ENCODE measurements at regions of chr20 and their contacts with region 1.

Region 1: GRCh38 chr20:25390538-25391528 is at the start of gene ABHD12:
- DNase-seq: peak; percentile 91 to 99 (median 97)

Region 2: DNA sequence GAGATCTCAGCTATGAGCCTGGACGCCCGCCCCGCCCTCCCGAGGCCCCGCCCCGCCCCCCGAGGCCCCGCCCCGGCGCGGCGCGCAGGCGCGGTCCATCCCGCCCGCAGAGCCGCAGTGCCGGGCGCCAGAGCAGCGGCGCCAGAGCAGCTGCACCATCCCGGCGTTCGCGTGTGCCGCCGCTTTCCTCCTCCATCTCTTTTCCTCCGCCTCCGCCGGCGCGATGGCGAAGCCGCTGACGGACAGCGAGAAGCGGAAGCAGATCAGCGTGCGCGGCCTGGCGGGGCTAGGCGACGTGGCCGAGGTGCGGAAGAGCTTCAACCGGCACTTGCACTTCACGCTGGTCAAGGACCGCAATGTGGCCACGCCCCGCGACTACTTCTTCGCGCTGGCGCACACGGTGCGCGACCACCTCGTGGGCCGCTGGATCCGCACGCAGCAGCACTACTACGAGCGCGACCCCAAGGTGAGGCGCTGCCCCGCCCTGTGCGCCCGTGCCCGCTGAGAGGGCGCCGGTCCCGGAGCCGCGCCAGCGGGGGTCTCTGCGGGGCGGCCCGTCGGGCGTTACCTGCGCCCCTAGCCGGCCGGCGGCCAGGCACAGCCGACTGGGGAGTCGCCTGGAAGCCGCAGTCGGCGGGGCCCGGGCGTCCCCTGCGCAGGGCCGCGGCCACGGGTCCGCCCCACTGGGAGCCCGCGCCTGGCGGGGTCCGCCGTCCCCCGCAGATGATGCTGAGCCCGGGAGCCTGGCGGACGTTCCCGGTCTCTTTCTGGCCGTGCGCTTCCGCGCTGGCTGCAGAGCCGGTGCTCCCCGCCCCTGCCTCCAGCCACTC is 142.7 kb before region 1 on chr20 and contains the start of gene PYGB:
- intact Hi-C with region 1: loop called (anchors 5 kb)
- DNase-seq: peak; percentile 34 to 90 (median 82)

Region 3: DNA sequence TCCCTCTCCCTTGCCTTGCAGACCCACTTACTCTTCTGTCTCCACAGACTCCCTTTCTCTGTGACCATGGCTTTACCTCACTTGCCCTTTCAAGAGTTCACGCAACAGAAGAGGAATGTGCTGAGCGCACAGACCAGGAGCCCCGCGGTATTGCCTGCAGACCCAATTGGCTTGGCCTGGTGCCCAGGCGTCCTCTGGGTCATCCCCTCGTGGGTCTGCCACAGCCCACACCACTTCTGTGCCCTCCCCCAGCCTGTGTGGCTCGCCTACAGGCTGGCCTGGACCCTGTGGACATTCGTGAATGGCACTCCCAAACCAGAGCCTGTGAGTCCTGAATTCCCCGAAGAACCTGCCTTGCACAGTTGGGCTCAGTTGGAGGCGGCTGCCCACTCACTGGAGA is 209.8 kb after region 1 on chr20:
- intact Hi-C with region 1: no loop called
- DNase-seq: no peak

Region 4: GRCh38 chr20:25669826-25670422 is 279.1 kb after region 1 on chr20:
- intact Hi-C with region 1: no loop called
- DNase-seq: no peak